A549 (cell line): ENCODE measurements at regions of chr3 and their contacts with region 1.

Region 1: GRCh38 chr3:5026331-5027218 is 47.3 kb downstream of the BHLHE40 start:
- DNase-seq: peak; percentile 79 to 98
- ATAC-seq: peak; percentile 85 to 87
- H3K4me3 ChIP-seq: peak overlapping the region; percentile 27
- H3K27ac ChIP-seq: peak overlapping the region; percentile 94 to 98
- H3K4me1 ChIP-seq: peaks cover 49% of the 10 kb centered on the region
- CTCF ChIP-seq: peak; percentile 70
- EP300 ChIP-seq: peak; percentile 96 to 99; a peak in 4 of 5 replicates
- POLR2A ChIP-seq: no peak
- RAD21 ChIP-seq: peak; percentile 93 to 95

Region 2: GRCh38 chr3:4656059-4656458 is 370.5 kb before region 1 on chr3:
- CTCF ChIA-PET with region 1: interaction called, 11 read pairs
- POLR2A ChIA-PET with region 1: no interaction called
- DNase-seq: peak; percentile 62 to 77
- ATAC-seq: peak; percentile 98 to 100
- H3K4me3 ChIP-seq: no peak overlapping the region
- H3K27ac ChIP-seq: no peak overlapping the region
- H3K4me1 ChIP-seq: no peaks in the 10 kb centered on the region
- CTCF ChIP-seq: peak; percentile 93
- EP300 ChIP-seq: no peak
- POLR2A ChIP-seq: no peak
- RAD21 ChIP-seq: peak; percentile 97 to 98

Region 3: GRCh38 chr3:4994823-4995499 is 31.6 kb before region 1 on chr3:
- CTCF ChIA-PET with region 1: interaction called, 17 read pairs
- POLR2A ChIA-PET with region 1: interaction called, 8 read pairs
- DNase-seq: peak in 1 of 2 experiments; percentile 84
- ATAC-seq: peak; percentile 70 to 72
- H3K4me3 ChIP-seq: no peak overlapping the region
- H3K27ac ChIP-seq: peak overlapping the region; percentile 83 to 91
- H3K4me1 ChIP-seq: peaks cover 55% of the 10 kb centered on the region
- CTCF ChIP-seq: no peak
- EP300 ChIP-seq: no peak
- POLR2A ChIP-seq: no peak
- RAD21 ChIP-seq: no peak

Region 4: GRCh38 chr3:5006755-5007202 is 19.8 kb before region 1 on chr3:
- CTCF ChIA-PET with region 1: interaction called, 16 read pairs
- POLR2A ChIA-PET with region 1: no interaction called
- DNase-seq: no peak
- ATAC-seq: no peak
- H3K4me3 ChIP-seq: no peak overlapping the region
- H3K27ac ChIP-seq: peak overlapping the region; percentile 42 to 59; a peak in 5 of 6 replicates
- H3K4me1 ChIP-seq: peaks cover 8% of the 10 kb centered on the region; the same call in 2 of the 3 replicates
- CTCF ChIP-seq: no peak
- EP300 ChIP-seq: no peak
- POLR2A ChIP-seq: no peak
- RAD21 ChIP-seq: no peak

Region 5: GRCh38 chr3:5016218-5017161 is 10.1 kb before region 1 on chr3:
- CTCF ChIA-PET with region 1: interaction called, 17 read pairs
- POLR2A ChIA-PET with region 1: interaction called, 18 read pairs
- DNase-seq: peak; percentile 90 to 95
- ATAC-seq: peak; percentile 74 to 81
- H3K4me3 ChIP-seq: no peak overlapping the region
- H3K27ac ChIP-seq: peak overlapping the region; percentile 94 to 98
- H3K4me1 ChIP-seq: peaks cover 98% of the 10 kb centered on the region
- CTCF ChIP-seq: no peak
- EP300 ChIP-seq: peak; percentile 83 to 85; a peak in 4 of 5 replicates
- POLR2A ChIP-seq: no peak
- RAD21 ChIP-seq: peak in 1 of 2 experiments; percentile 17; a peak in 1 of 5 replicates

Region 6: GRCh38 chr3:5041315-5041714 is 14.7 kb after region 1 on chr3:
- CTCF ChIA-PET with region 1: interaction called, 23 read pairs
- POLR2A ChIA-PET with region 1: interaction called, 4 read pairs
- DNase-seq: no peak
- ATAC-seq: no peak; a peak in 1 of 6 replicates
- H3K4me3 ChIP-seq: no peak overlapping the region
- H3K27ac ChIP-seq: no peak overlapping the region
- H3K4me1 ChIP-seq: no peaks in the 10 kb centered on the region
- CTCF ChIP-seq: no peak
- EP300 ChIP-seq: no peak
- POLR2A ChIP-seq: no peak
- RAD21 ChIP-seq: no peak

Region 7: GRCh38 chr3:5057857-5058324 is 31.3 kb after region 1 on chr3:
- CTCF ChIA-PET with region 1: interaction called, 31 read pairs
- POLR2A ChIA-PET with region 1: no interaction called
- DNase-seq: peak; percentile 62 to 91
- ATAC-seq: peak; percentile 96
- H3K4me3 ChIP-seq: no peak overlapping the region
- H3K27ac ChIP-seq: peak overlapping the region; percentile 9 to 73; a peak in 4 of 6 replicates
- H3K4me1 ChIP-seq: peaks cover 16% of the 10 kb centered on the region; the same call in 2 of the 3 replicates
- CTCF ChIP-seq: peak; percentile 92
- EP300 ChIP-seq: no peak
- POLR2A ChIP-seq: no peak
- RAD21 ChIP-seq: peak; percentile 95 to 97